Naive thymus-derived CD4-positive, alpha-beta T cell (primary cell): ENCODE measurements at regions of chr2 and their contacts with region 1.

Region 1: GRCh38 chr2:230347659-230348305 is 20.8 kb downstream of the SP140L start:
- DNase-seq: peak in 1 of 9 donors; percentile 37
- ATAC-seq: no peak
- H3K4me3 ChIP-seq: no peak overlapping the region
- H3K4me3 Mint-ChIP-seq: peak overlapping the region; percentile 21 to 77 (median 62)
- H3K27ac ChIP-seq: no peak overlapping the region
- H3K27ac Mint-ChIP-seq: peak overlapping the region in 8 of 9 donors; percentile 20 to 95 (median 78)
- H3K4me1 ChIP-seq: peaks cover 12 to 29% of the 10 kb centered on the region in 2 donors
- H3K4me1 Mint-ChIP-seq: peaks cover 34 to 84% (median 77%) of the 10 kb centered on the region in 7 donors
- H3K27me3 ChIP-seq: no peaks in the 10 kb centered on the region
- H3K27me3 Mint-ChIP-seq: no peaks in the 10 kb centered on the region

Region 2: GRCh38 chr2:230262246-230262645 is 85.5 kb before region 1 on chr2:
- CTCF ChIA-PET with region 1: no interaction called
- POLR2A ChIA-PET with region 1: no interaction called
- intact Hi-C with region 1: loop called in 1 of 2 experiments (anchors 5 kb)
- DNase-seq: peak in 7 of 9 donors; percentile 32 to 86 (median 77)
- ATAC-seq: peak; percentile 85
- H3K4me3 ChIP-seq: no peak overlapping the region
- H3K4me3 Mint-ChIP-seq: peak overlapping the region in 9 of 10 donors; percentile 54 to 82 (median 67)
- H3K27ac ChIP-seq: peak overlapping the region; percentile 22
- H3K27ac Mint-ChIP-seq: peak overlapping the region; percentile 68 to 99 (median 83)
- H3K4me1 ChIP-seq: peaks cover 13 to 23% of the 10 kb centered on the region in 2 donors
- H3K4me1 Mint-ChIP-seq: peaks cover 29 to 68% (median 53%) of the 10 kb centered on the region in 7 donors
- H3K27me3 ChIP-seq: no peaks in the 10 kb centered on the region
- H3K27me3 Mint-ChIP-seq: no peaks in the 10 kb centered on the region

Region 3: DNA sequence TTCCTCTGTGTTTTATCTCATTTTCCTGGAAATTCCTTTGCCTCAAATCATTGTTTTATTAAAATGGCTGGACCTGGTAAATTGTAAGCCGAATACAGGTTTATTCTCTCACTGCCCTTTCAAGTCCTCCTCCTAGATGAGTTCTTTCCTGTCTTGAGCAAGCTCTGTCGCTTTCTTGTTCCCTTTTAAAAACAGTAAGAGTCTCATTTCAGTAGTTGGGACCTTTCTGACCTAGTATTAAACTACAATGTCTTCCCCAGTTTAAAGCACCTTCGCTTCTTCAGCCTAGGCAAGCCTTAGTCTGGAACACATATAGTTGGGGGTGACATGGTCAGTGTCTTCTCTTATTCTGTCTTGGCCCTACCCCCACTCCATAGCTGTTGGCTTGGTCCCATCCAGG is 61.7 kb before region 1 on chr2:
- CTCF ChIA-PET with region 1: no interaction called
- POLR2A ChIA-PET with region 1: no interaction called
- intact Hi-C with region 1: no loop called
- DNase-seq: no peak
- ATAC-seq: no peak
- H3K4me3 ChIP-seq: no peak overlapping the region
- H3K4me3 Mint-ChIP-seq: no peak overlapping the region
- H3K27ac ChIP-seq: no peak overlapping the region
- H3K27ac Mint-ChIP-seq: peak overlapping the region in 1 of 9 donors; percentile 42
- H3K4me1 ChIP-seq: peaks cover 0 to 6% of the 10 kb centered on the region in 2 donors
- H3K4me1 Mint-ChIP-seq: peaks cover 0 to 21% (median 10%) of the 10 kb centered on the region in 7 donors
- H3K27me3 ChIP-seq: no peaks in the 10 kb centered on the region
- H3K27me3 Mint-ChIP-seq: no peaks in the 10 kb centered on the region

Region 4: GRCh38 chr2:230326453-230327417 is 21.0 kb before region 1 on chr2 and contains the start of gene SP140L:
- CTCF ChIA-PET with region 1: interaction called, 4 read pairs
- POLR2A ChIA-PET with region 1: interaction called, 9 read pairs
- intact Hi-C with region 1: loop called in 1 of 2 experiments (anchors 1 kb)
- DNase-seq: peak; percentile 48 to 83 (median 73)
- ATAC-seq: peak; percentile 99
- H3K4me3 ChIP-seq: peak within 1 kb of the TSS; percentile 86
- H3K4me3 Mint-ChIP-seq: peak within 1 kb of the TSS; percentile 90 to 100 (median 94)
- H3K27ac ChIP-seq: peak within 1 kb of the TSS; percentile 92
- H3K27ac Mint-ChIP-seq: peak within 1 kb of the TSS; percentile 95 to 99 (median 99)
- H3K4me1 ChIP-seq: peaks cover 23 to 36% of the 10 kb centered on the region in 2 donors
- H3K4me1 Mint-ChIP-seq: peaks cover 58 to 86% (median 85%) of the 10 kb centered on the region in 7 donors
- H3K27me3 ChIP-seq: no peaks in the 10 kb centered on the region
- H3K27me3 Mint-ChIP-seq: no peaks in the 10 kb centered on the region
- total RNA-seq, gene SP140L: 62.8 to 121 (median 89.5) TPM

Region 5: GRCh38 chr2:230335451-230335863 is 12.3 kb before region 1 on chr2:
- CTCF ChIA-PET with region 1: no interaction called
- POLR2A ChIA-PET with region 1: interaction called, 4 read pairs
- intact Hi-C with region 1: loop called in 1 of 2 experiments (anchors 1 kb)
- DNase-seq: no peak
- ATAC-seq: peak; percentile 20
- H3K4me3 ChIP-seq: peak overlapping the region; percentile 28
- H3K4me3 Mint-ChIP-seq: peak overlapping the region; percentile 71 to 92 (median 78)
- H3K27ac ChIP-seq: peak overlapping the region; percentile 66
- H3K27ac Mint-ChIP-seq: peak overlapping the region; percentile 83 to 95 (median 89)
- H3K4me1 ChIP-seq: peaks cover 0 to 41% of the 10 kb centered on the region in 2 donors
- H3K4me1 Mint-ChIP-seq: peaks cover 48 to 74% (median 63%) of the 10 kb centered on the region in 7 donors
- H3K27me3 ChIP-seq: no peaks in the 10 kb centered on the region
- H3K27me3 Mint-ChIP-seq: no peaks in the 10 kb centered on the region